Sigmoid colon (tissue), 7 donors: ENCODE measurements at regions of chr15 and their contacts with region 1.

Region 1: GRCh38 chr15:40108855-40109735 is at the start of gene BMF:
- DNase-seq: peak; percentile 100
- H3K4me3 ChIP-seq: peak within 1 kb of the TSS; percentile 73 to 97 (median 90)
- H3K27ac ChIP-seq: peak within 1 kb of the TSS; percentile 85 to 98 (median 95)
- H3K4me1 ChIP-seq: peaks cover 0 to 48% (median 40%) of the 10 kb centered on the region in 4 donors
- H3K27me3 ChIP-seq: no peaks in the 10 kb centered on the region
- CTCF ChIP-seq: peak in 1 of 4 experiments; percentile 14
- EP300 ChIP-seq: peak in 1 of 4 donors; percentile 61
- POLR2A ChIP-seq: no peak
- total RNA-seq, gene BMF: 5.8 to 18.0 (median 14.8) TPM

Region 2: GRCh38 chr15:39920510-39921273 is 188.4 kb before region 1 on chr15:
- intact Hi-C with region 1: loop called (anchors 10 kb)
- DNase-seq: peak; percentile 81
- H3K4me3 ChIP-seq: peak overlapping the region; percentile 54 to 79 (median 74)
- H3K27ac ChIP-seq: peak overlapping the region; percentile 71 to 87 (median 80)
- H3K4me1 ChIP-seq: peaks cover 0 to 27% (median 14%) of the 10 kb centered on the region in 4 donors
- H3K27me3 ChIP-seq: peaks cover 0 to 11% (median 0%) of the 10 kb centered on the region in 3 donors
- CTCF ChIP-seq: peak in 1 of 4 experiments; percentile 10
- EP300 ChIP-seq: no peak
- POLR2A ChIP-seq: no peak

Region 3: GRCh38 chr15:40044717-40045571 is 64.2 kb before region 1 on chr15:
- intact Hi-C with region 1: loop called (anchors 2 kb)
- DNase-seq: peak; percentile 93
- H3K4me3 ChIP-seq: peak overlapping the region in 1 of 4 donors; percentile 18
- H3K27ac ChIP-seq: peak overlapping the region; percentile 31 to 65 (median 47)
- H3K4me1 ChIP-seq: peaks cover 0 to 55% (median 40%) of the 10 kb centered on the region in 4 donors
- H3K27me3 ChIP-seq: no peaks in the 10 kb centered on the region
- CTCF ChIP-seq: peak; percentile 90 to 93 (median 92)
- EP300 ChIP-seq: no peak
- POLR2A ChIP-seq: no peak

Region 4: DNA sequence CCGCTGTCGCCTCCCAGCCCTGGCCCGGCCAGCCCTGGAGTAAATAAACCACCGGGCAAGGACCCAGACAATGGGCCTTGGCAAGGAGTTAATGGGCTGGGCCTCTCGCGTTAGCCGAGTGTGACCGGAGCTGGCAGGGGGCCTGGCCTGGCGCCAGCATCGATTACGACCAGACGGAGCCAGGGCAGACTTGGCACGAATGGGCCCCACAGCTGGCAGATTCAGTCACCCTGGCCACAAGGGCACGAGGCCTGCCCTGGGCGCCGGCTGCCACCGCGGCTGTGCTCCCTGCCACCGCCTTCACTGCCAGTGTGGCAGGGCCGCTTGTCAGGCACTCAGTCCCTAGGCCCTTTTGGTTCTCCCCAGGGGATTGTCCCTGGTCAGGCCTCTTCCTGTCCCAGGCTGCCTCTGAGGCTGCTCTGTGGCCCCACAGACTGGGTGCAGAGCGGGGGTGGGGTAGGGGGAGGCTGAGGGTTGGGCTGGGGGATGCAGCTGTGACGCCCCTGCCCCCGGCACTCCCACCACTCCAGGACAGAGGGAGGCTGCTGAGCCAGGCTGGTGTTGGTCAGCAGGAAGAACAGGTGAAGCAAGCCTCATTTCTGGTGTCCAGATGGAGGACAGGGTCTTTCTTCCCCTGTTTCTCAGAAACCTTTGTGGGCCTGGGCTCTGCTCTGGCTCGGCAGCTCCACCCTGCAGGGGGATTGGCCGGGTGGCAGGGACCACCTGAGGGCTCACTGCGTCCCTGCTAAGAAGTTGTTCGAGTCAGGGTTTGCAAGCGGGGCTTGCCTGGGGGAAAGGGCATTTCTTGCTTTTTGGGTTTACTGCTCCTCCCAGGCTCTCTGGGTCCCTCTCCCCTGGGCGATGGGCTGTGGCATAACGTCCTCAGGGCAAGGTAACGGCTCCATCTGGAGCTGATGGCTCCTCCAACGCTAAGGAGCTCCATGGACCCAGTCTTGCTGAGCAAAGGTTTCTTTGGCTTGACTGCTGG is 39.6 kb before region 1 on chr15:
- intact Hi-C with region 1: loop called (anchors 5 kb)
- DNase-seq: peak; percentile 94
- H3K4me3 ChIP-seq: peak overlapping the region in 1 of 4 donors; percentile 6
- H3K27ac ChIP-seq: peak overlapping the region; percentile 61 to 77 (median 74)
- H3K4me1 ChIP-seq: peaks cover 0 to 27% (median 22%) of the 10 kb centered on the region in 4 donors
- H3K27me3 ChIP-seq: no peaks in the 10 kb centered on the region
- CTCF ChIP-seq: no peak
- EP300 ChIP-seq: no peak
- POLR2A ChIP-seq: no peak

Region 5: DNA sequence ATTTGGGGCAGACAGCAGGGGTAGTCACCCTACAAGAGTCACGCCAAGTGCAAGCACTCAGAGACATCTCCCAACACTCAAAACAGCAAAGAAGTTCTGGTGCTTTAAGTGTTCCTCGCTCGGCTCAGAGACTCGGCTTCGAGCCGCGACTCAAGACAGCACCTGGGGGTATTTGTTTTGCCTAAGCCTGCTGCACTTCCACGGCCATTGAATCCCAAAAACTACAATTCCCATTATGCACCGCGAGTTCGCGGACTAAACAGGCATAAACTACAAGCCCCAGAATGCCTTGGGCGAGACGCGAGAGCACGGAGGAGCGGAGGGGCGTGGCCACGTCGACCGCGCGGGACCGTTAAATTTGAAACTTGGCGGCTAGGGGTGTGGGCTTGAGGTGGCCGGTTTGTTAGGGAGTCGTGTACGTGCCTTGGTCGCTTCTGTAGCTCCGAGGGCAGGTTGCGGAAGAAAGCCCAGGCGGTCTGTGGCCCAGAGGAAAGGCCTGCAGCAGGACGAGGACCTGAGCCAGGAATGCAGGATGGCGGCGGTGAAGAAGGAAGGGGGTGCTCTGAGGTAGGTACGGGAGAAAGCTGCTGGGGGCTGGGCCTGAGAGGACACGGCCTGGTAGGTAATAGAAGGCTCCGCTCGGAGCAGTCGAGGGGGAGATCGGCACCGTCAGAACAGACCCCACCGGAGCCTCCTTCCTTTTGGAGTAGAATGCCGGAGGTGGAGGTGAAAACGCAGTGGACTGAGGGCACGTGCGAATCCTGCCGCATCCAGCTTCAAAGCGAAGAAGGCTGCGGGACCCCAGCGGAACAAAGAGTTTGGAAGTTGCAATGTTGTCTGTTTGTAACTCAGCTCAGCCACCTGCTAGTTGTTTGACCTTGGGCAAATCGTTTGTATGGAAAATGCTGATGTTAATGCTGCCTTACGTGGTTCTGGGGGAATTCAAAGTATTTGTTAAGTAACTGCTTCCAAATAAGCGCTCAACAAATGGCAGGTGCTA is 51.9 kb after region 1 on chr15 and contains the start of gene BUB1B:
- intact Hi-C with region 1: loop called (anchors 1 kb)
- DNase-seq: peak; percentile 95
- H3K4me3 ChIP-seq: peak within 1 kb of the TSS; percentile 28 to 60 (median 50)
- H3K27ac ChIP-seq: no peak within 1 kb of the TSS
- H3K4me1 ChIP-seq: peaks cover 0 to 13% (median 6%) of the 10 kb centered on the region in 4 donors
- H3K27me3 ChIP-seq: no peaks in the 10 kb centered on the region
- CTCF ChIP-seq: no peak
- EP300 ChIP-seq: no peak
- POLR2A ChIP-seq: no peak
- total RNA-seq, gene BUB1B: 0.33 to 3.6 (median 1.2) TPM

Region 6: GRCh38 chr15:40252438-40253166 is 143.5 kb after region 1 on chr15:
- intact Hi-C with region 1: no loop called
- DNase-seq: no peak
- H3K4me3 ChIP-seq: peak overlapping the region; percentile 27 to 58 (median 52)
- H3K27ac ChIP-seq: peak overlapping the region in 1 of 4 donors; percentile 45
- H3K4me1 ChIP-seq: peaks cover 0 to 18% (median 15%) of the 10 kb centered on the region in 4 donors
- H3K27me3 ChIP-seq: peaks cover 0 to 33% (median 0%) of the 10 kb centered on the region in 3 donors
- CTCF ChIP-seq: no peak
- EP300 ChIP-seq: no peak
- POLR2A ChIP-seq: no peak

Region 7: DNA sequence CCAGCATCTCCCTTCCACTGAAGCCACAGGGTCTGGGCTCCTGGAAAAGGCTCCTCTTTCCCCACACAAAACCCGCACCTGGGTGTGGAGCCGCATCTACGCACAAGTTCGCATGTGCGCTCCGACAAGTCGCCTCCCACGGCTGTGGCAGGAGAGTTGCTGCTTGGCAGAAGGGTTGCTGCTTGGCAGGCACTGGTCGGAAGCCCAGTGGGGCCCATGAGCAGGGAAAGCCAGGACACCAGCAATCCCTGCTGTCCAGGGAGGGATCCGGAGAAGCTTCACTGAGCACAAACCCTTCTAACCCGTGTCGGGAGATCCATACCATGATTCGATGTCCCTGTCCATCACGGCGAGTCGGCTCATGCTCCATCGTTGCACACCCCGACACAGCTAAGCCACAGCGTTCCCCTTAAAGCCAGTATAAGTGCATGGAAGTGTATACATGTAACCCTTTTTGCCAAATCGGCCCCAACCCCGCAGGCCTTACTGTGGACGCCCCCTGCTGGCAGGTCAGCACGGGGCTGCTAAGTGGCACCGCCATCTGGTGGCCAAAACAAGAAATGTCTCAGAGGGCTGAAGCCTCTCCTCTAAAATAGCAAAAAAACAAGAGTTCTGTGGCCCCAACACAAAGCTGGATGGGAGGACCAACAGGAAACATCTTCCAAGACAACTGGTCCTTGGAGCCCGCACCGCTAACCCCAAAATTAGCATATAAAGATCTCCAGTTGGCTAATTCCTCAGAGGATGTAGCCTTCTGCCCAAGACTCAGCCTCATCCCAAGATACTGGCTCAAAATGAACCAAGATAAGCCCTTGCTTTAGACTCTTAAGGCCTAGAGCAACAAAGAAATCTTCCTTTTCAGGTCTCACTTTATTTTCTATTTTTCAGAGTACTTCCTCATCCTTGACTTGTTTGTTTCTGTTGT is 165.5 kb after region 1 on chr15:
- intact Hi-C with region 1: loop called (anchors 1 kb)
- DNase-seq: peak; percentile 90
- H3K4me3 ChIP-seq: no peak overlapping the region
- H3K27ac ChIP-seq: no peak overlapping the region
- H3K4me1 ChIP-seq: peaks cover 0 to 5% (median 3%) of the 10 kb centered on the region in 4 donors
- H3K27me3 ChIP-seq: peaks cover 1 to 23% (median 10%) of the 10 kb centered on the region in 3 donors
- CTCF ChIP-seq: peak; percentile 100
- EP300 ChIP-seq: no peak
- POLR2A ChIP-seq: no peak

Region 8: GRCh38 chr15:40338041-40338657 is 229.1 kb after region 1 on chr15:
- intact Hi-C with region 1: loop called (anchors 5 kb)
- DNase-seq: peak; percentile 94
- H3K4me3 ChIP-seq: peak overlapping the region in 3 of 4 donors; percentile 59 to 66 (median 64)
- H3K27ac ChIP-seq: peak overlapping the region; percentile 97 to 99 (median 99)
- H3K4me1 ChIP-seq: peaks cover 0 to 100% (median 99%) of the 10 kb centered on the region in 4 donors
- H3K27me3 ChIP-seq: no peaks in the 10 kb centered on the region
- CTCF ChIP-seq: peak in 3 of 4 experiments; percentile 49 to 62 (median 53)
- EP300 ChIP-seq: no peak
- POLR2A ChIP-seq: no peak

Region 9: DNA sequence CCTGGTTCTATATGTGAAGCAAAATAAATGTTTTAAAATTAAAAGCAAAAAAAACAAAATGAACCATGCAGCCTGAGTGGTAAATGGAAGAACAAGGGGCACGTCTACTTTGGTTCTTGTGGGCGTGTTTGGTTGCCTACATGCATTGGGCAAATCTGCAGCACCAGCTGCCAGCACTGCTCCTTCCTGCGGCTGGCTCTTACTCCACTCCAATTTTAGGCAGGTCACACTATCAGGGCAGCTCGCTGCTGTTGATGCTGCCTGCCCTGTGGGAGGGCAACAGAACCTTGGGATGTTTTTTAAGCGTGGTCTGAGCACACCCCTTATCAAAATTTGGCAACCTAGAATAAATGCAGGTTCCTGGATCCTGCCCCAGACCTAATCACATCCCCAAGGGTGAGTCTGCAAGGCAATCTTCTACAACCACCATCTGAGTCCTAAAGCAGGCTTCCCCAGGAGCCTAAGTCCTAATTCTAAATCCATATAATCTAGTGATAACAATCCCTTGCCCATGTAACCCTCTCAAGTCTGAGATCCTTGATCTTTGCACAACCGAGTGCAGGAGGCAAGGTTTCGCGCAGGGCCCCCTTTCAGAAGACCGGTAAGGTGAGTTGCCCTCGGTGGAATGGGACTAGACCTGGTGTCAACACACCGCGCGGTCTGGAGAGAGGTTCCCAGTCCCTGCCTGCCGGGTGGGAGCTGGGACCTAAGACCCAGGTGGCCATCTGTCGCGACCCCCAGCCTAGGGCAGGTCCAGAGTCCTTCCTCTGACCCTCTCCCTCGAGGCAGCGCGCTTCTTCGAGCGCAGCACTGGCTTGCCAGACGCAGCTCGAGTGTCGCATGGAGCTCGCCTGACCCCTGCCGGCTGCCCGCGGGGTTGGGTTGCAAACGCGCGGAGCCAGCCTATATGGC is 312.4 kb after region 1 on chr15:
- intact Hi-C with region 1: no loop called
- DNase-seq: peak; percentile 85
- H3K4me3 ChIP-seq: no peak overlapping the region
- H3K27ac ChIP-seq: no peak overlapping the region
- H3K4me1 ChIP-seq: peaks cover 0 to 17% (median 10%) of the 10 kb centered on the region in 4 donors
- H3K27me3 ChIP-seq: no peaks in the 10 kb centered on the region
- CTCF ChIP-seq: peak; percentile 91 to 94 (median 92)
- EP300 ChIP-seq: no peak
- POLR2A ChIP-seq: no peak